ENCODE measurements at regions of chr13 and their contacts with region 1.

Region 1: DNA sequence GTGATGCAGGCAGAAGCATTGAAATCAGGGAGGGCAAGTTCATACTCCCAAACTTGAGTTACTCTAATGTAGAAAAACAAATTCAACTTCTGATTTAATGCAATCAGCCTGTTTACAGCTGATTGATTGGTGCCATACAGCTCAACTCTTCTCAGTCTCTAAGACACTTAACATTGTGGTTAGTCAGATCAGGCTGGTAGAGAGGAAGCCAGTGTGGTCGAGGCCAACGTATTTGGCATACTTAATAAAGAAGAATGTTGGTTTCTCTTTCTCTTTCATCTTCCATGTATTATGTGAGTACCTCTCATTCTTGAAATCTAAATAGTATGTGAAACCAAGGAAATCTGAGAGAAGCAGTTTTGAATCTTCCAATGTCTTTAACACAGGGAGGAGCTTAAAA is 255.0 kb upstream of the SLITRK1 start:
- DNase-seq: peak; percentile 74
- H3K4me3 Mint-ChIP-seq: peak overlapping the region; percentile 53
- H3K27ac Mint-ChIP-seq: peak overlapping the region; percentile 84
- H3K4me1 Mint-ChIP-seq: peaks cover 18% of the 10 kb centered on the region
- H3K27me3 Mint-ChIP-seq: no peaks in the 10 kb centered on the region

Region 2: DNA sequence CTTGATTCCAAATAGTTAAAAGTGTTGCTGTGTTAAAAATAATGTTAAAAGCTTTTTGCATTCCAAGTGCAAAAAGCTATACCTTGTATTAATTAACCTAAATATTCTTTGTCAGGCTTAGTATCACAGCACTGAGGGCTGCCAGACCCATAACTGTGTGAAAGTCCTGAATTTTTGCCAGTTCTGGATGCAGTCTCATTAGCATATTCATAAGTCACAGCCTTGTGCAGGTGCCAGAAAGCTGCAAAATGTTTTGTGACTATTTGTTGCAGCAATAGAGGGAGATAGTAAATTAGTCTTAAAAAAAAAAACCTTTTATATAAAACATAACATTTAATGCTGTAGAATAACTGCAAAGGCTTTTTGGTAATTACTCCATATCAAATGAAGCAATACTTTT is 311.6 kb before region 1 on chr13:
- CTCF ChIA-PET with region 1: no interaction called
- POLR2A ChIA-PET with region 1: no interaction called
- intact Hi-C with region 1: no loop called
- DNase-seq: no peak
- H3K4me3 Mint-ChIP-seq: no peak overlapping the region
- H3K27ac Mint-ChIP-seq: no peak overlapping the region
- H3K4me1 Mint-ChIP-seq: no peaks in the 10 kb centered on the region
- H3K27me3 Mint-ChIP-seq: no peaks in the 10 kb centered on the region

Region 3: DNA sequence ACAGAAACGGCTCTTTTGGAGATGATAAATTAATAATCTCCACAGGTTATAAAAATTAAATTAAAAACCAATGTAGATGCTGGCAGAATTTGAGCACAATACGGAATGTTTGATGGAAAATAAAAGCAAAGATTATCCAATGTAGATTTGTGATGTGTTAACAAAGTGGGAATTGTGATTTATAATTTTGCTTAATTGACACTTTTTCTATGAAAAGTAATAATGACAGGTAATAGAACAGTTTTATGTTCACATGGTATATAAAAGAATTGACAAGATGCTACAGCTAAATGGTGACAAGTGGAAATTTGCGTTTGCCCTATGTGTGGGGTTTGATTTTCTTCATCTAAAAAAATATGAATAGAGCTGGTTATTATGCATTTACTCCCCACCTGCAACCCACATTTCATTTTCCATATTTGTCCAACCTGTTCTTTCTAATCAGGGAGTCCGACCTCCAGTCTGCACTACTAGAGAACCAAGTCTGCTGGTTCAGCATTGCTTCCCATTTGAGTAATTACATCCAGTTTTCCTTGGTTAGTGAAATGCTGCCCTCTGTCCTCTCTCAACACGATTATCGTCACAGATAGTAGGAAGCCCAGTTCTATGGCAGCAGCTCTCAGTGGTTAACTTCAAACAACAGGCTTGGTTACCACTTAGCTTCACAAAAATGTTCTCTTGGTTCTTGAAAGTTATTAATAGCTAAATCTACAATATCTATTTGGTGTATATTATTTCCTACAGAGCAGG is 193.6 kb before region 1 on chr13:
- CTCF ChIA-PET with region 1: no interaction called
- POLR2A ChIA-PET with region 1: no interaction called
- intact Hi-C with region 1: no loop called
- DNase-seq: no peak
- H3K4me3 Mint-ChIP-seq: no peak overlapping the region
- H3K27ac Mint-ChIP-seq: no peak overlapping the region
- H3K4me1 Mint-ChIP-seq: no peaks in the 10 kb centered on the region
- H3K27me3 Mint-ChIP-seq: no peaks in the 10 kb centered on the region

Region 4: GRCh38 chr13:83980331-83980730 is 157.0 kb before region 1 on chr13:
- CTCF ChIA-PET with region 1: no interaction called
- POLR2A ChIA-PET with region 1: no interaction called
- intact Hi-C with region 1: no loop called
- DNase-seq: no peak
- H3K4me3 Mint-ChIP-seq: no peak overlapping the region
- H3K27ac Mint-ChIP-seq: no peak overlapping the region
- H3K4me1 Mint-ChIP-seq: peaks cover 5% of the 10 kb centered on the region
- H3K27me3 Mint-ChIP-seq: no peaks in the 10 kb centered on the region

Region 5: DNA sequence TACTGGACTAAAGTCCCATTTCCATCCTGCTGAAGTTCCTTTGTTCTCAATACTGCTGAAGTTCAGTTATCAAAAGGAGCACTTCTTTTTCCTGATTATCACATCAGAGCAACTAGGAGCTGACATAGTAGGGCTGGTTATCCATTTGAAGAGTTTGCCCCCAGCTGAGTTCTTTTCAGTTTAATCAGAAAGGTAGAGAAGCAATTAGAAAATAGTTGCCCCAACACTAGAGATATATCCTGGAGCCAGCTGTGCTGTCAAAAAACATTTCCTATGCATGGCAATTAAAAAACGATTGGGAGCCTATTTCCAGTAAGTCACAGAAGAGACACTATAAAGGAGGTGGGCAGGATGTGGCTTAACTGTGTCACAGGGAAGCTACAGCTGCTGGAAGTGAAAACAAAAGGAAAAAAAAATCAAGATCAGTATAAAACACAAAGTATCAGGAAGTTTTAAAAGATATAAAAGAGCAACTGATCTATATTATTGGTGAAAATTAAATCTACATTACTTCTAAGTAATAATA is 99.3 kb before region 1 on chr13:
- CTCF ChIA-PET with region 1: no interaction called
- POLR2A ChIA-PET with region 1: no interaction called
- intact Hi-C with region 1: loop called (anchors 2 kb)
- DNase-seq: no peak
- H3K4me3 Mint-ChIP-seq: no peak overlapping the region
- H3K27ac Mint-ChIP-seq: no peak overlapping the region
- H3K4me1 Mint-ChIP-seq: peaks cover 12% of the 10 kb centered on the region
- H3K27me3 Mint-ChIP-seq: no peaks in the 10 kb centered on the region

Region 6: DNA sequence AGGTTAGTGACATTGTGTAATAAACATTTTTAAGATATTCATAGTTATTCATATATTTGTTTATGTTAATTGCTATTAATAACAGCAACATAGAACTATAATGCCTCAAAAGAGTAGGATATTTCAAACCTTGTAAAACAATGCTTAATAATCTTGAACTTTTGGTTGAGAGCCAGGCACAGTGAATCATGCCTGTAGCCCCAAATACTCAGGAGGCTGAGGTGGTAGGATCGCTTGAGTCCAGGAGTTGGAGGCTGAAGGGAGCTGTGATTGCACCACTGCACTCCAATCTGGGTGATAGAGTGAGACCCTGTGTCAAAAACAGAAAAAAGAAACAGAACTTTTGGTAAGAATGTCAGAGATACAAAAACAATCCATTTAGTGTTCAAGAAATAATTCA is 41.1 kb before region 1 on chr13:
- CTCF ChIA-PET with region 1: no interaction called
- POLR2A ChIA-PET with region 1: no interaction called
- intact Hi-C with region 1: no loop called
- DNase-seq: no peak
- H3K4me3 Mint-ChIP-seq: no peak overlapping the region
- H3K27ac Mint-ChIP-seq: no peak overlapping the region
- H3K4me1 Mint-ChIP-seq: no peaks in the 10 kb centered on the region
- H3K27me3 Mint-ChIP-seq: no peaks in the 10 kb centered on the region

Measured in activated CD4-positive, alpha-beta memory T cell treated with anti-CD3 and anti-CD28 coated beads for 36 hours (primary cell).